ENCODE measurements at regions of chr1 and their contacts with region 1.

Region 1: GRCh38 chr1:208652296-208653160 is 408.3 kb upstream of the PLXNA2 start:
- DNase-seq: peak; percentile 23
- ATAC-seq: peak; percentile 89
- H3K4me3 ChIP-seq: no peak overlapping the region
- H3K27ac ChIP-seq: no peak overlapping the region
- H3K4me1 ChIP-seq: no peaks in the 10 kb centered on the region
- H3K27me3 ChIP-seq: no peaks in the 10 kb centered on the region
- CTCF ChIP-seq: peak; percentile 77
- EP300 ChIP-seq: no peak
- POLR2A ChIP-seq: no peak
- RAD21 ChIP-seq: no peak

Region 2: GRCh38 chr1:209565759-209566678 is 913.5 kb after region 1 on chr1:
- CTCF ChIA-PET with region 1: no interaction called
- POLR2A ChIA-PET with region 1: no interaction called
- in situ Hi-C with region 1: no loop called
- intact Hi-C with region 1: loop called (anchors 2 kb)
- DNase-seq: peak; percentile 68
- ATAC-seq: peak; percentile 97
- H3K4me3 ChIP-seq: no peak overlapping the region
- H3K27ac ChIP-seq: no peak overlapping the region
- H3K4me1 ChIP-seq: no peaks in the 10 kb centered on the region
- H3K27me3 ChIP-seq: no peaks in the 10 kb centered on the region; a peak in 1 of 5 replicates
- CTCF ChIP-seq: peak; percentile 77
- EP300 ChIP-seq: no peak
- POLR2A ChIP-seq: no peak
- RAD21 ChIP-seq: no peak